CD4-positive, alpha-beta memory T cell (primary cell): ENCODE measurements at regions of chr3 and their contacts with region 1.

Region 1: DNA sequence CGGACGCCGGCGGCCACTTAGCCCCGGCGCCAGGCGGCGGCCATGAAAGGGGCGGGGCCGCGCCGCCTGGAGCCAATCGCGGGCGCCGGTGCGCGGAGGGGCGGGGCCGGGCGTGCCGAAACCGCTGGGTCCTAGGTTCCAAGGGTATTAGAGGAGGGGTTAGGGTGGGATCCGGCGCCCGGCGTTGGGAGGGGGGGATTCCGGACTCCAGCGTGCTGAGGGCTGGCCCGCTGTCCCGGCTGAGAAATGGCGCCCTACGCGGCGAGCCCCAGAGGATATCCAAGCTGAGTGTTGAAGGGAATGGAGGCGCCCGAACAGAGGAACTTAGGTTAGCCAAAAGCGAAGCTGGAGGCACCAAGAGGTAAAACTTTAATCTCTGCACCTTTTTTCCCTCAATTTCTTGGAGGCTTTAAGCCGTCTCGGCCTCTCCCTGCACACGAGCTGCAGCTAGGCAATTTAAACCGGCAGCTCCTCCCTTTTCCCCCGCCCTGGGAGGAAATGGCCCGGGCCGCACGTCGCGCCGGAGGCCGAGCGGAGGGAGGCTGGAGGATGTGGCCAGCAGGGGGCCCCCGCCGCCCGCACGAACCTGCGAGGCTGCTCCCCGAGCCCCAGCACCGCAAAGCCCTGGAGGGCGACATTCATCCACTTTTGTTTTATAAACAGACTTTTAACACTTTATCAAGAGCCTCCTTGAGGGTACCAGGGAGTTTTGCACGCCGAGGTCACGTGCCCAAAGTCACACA is at the start of gene XXYLT1:
- DNase-seq: peak; percentile 87 to 92 (median 89)
- H3K4me3 ChIP-seq: peak within 1 kb of the TSS; percentile 82 to 90
- H3K4me3 Mint-ChIP-seq: peak within 1 kb of the TSS; percentile 85 to 93 (median 88)
- H3K27ac ChIP-seq: peak within 1 kb of the TSS; percentile 55
- H3K27ac Mint-ChIP-seq: peak within 1 kb of the TSS; percentile 77 to 94 (median 93)
- H3K4me1 ChIP-seq: peaks cover 25% of the 10 kb centered on the region
- H3K4me1 Mint-ChIP-seq: peaks cover 10 to 29% (median 23%) of the 10 kb centered on the region in 4 donors
- H3K27me3 ChIP-seq: no peaks in the 10 kb centered on the region
- H3K27me3 Mint-ChIP-seq: no peaks in the 10 kb centered on the region
- total RNA-seq, gene XXYLT1: 3.9 to 4.4 TPM

Region 2: DNA sequence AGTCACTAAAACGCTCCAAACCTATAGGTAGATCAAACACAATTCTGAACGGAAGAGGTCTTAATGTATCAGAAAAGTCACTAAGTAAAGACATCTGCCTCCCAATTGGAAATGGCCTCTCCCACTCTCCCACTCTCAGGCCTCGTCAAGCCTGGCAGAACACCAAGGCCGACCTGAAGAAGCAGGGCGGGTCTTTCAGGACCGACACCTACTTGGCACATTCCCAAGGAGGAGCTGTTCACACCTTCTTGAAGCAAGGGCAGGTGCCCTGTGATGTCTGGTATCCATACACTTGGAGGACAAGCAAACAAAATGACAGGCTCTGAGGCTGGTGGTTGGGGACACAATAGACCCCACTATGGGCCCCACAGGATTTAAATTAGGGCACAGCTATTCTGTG is 30.3 kb before region 1 on chr3:
- CTCF ChIA-PET with region 1: no interaction called
- POLR2A ChIA-PET with region 1: no interaction called
- intact Hi-C with region 1: no loop called
- DNase-seq: no peak
- H3K4me3 ChIP-seq: no peak overlapping the region
- H3K4me3 Mint-ChIP-seq: no peak overlapping the region
- H3K27ac ChIP-seq: no peak overlapping the region
- H3K27ac Mint-ChIP-seq: no peak overlapping the region
- H3K4me1 ChIP-seq: no peaks in the 10 kb centered on the region
- H3K4me1 Mint-ChIP-seq: peaks cover 0 to 2% (median under 1%) of the 10 kb centered on the region in 4 donors
- H3K27me3 ChIP-seq: no peaks in the 10 kb centered on the region
- H3K27me3 Mint-ChIP-seq: no peaks in the 10 kb centered on the region

Region 3: DNA sequence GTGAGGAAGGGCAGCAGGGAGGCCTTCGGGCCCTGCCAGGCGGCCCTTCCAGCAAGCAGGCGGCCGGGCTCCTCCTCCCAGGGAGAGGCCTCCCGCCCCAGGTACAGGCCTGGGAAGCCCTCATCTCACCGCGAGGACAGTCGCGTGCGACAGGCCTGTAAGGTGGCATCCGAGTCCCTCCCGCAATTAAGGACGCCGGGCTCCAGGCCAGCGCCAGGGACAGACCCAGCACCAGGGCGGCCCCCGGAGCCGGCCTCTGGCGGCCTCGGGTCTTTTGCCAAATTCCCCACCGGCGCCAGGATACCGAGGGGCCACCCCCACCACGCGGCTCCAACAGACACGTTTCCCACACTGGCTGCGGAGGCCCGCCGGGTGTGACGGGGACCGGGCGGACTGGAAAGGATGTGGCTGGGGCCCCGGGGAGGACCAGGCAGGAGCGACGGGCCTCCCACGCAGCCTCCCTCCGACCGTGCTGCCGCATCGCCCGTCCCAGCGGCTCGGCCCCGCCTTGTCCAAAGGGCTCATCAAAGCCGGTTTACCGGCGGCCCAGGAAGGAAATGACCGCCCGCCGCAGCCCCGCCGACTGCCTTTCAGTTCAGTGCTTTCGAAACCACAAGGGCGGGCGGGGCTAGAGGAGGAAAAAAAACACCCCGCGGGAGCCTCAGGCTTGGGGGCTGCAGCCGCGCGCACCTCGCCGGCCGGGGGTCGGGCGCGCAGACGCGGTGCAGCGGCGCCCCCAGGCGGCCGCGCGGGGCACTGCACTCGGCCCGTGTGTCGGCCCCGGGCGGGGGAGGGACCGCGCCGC is 11.6 kb before region 1 on chr3:
- CTCF ChIA-PET with region 1: interaction called, 43 read pairs
- POLR2A ChIA-PET with region 1: interaction called, 31 read pairs
- intact Hi-C with region 1: loop called (anchors 1 kb)
- DNase-seq: peak; percentile 87 to 94 (median 89)
- H3K4me3 ChIP-seq: peak overlapping the region in 1 of 2 donors; percentile 90
- H3K4me3 Mint-ChIP-seq: peak overlapping the region; percentile 62 to 79 (median 72)
- H3K27ac ChIP-seq: peak overlapping the region; percentile 76
- H3K27ac Mint-ChIP-seq: peak overlapping the region; percentile 75 to 93 (median 84)
- H3K4me1 ChIP-seq: peaks cover 27% of the 10 kb centered on the region
- H3K4me1 Mint-ChIP-seq: peaks cover 8 to 24% (median 14%) of the 10 kb centered on the region in 4 donors
- H3K27me3 ChIP-seq: no peaks in the 10 kb centered on the region
- H3K27me3 Mint-ChIP-seq: no peaks in the 10 kb centered on the region

Region 4: DNA sequence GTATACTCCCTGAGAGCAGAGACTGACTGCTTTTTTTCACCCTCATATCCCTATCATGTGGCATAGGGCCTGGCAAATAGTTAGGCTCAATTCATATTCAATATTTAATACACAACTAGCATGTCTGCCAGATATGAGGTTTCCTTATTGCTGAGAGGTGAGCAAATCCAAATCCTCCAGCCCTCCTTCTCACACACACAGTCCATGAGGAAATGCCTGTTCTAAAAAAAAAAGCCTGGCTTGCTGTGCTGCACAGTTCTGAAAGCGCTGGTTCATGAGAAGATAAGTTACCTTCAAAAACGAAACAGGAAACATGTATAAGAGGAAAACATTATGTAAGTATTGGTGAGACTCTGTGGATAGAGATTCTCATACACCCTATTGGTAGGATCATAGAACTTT is 187.0 kb after region 1 on chr3:
- CTCF ChIA-PET with region 1: interaction called, 6 read pairs
- POLR2A ChIA-PET with region 1: interaction called, 3 read pairs
- intact Hi-C with region 1: loop called (anchors 1 kb)
- DNase-seq: peak in 4 of 5 donors; percentile 43 to 59 (median 50)
- H3K4me3 ChIP-seq: no peak overlapping the region
- H3K4me3 Mint-ChIP-seq: peak overlapping the region; percentile 20 to 78 (median 76)
- H3K27ac ChIP-seq: no peak overlapping the region
- H3K27ac Mint-ChIP-seq: peak overlapping the region; percentile 45 to 92 (median 91)
- H3K4me1 ChIP-seq: peaks cover 13% of the 10 kb centered on the region
- H3K4me1 Mint-ChIP-seq: peaks cover 7 to 25% (median 15%) of the 10 kb centered on the region in 4 donors
- H3K27me3 ChIP-seq: no peaks in the 10 kb centered on the region
- H3K27me3 Mint-ChIP-seq: peaks cover 0 to 3% of the 10 kb centered on the region in 2 donors

Region 5: GRCh38 chr3:195522254-195523023 is 251.2 kb after region 1 on chr3:
- CTCF ChIA-PET with region 1: interaction called, 112 read pairs
- POLR2A ChIA-PET with region 1: interaction called, 33 read pairs
- intact Hi-C with region 1: loop called (anchors 1 kb)
- DNase-seq: peak in 4 of 5 donors; percentile 46 to 56 (median 54)
- H3K4me3 ChIP-seq: no peak overlapping the region
- H3K4me3 Mint-ChIP-seq: peak overlapping the region in 1 of 8 donors; percentile 31
- H3K27ac ChIP-seq: no peak overlapping the region
- H3K27ac Mint-ChIP-seq: peak overlapping the region; percentile 38 to 82 (median 58)
- H3K4me1 ChIP-seq: peaks cover 50% of the 10 kb centered on the region
- H3K4me1 Mint-ChIP-seq: peaks cover 36 to 51% (median 42%) of the 10 kb centered on the region in 4 donors
- H3K27me3 ChIP-seq: no peaks in the 10 kb centered on the region
- H3K27me3 Mint-ChIP-seq: no peaks in the 10 kb centered on the region

Region 6: DNA sequence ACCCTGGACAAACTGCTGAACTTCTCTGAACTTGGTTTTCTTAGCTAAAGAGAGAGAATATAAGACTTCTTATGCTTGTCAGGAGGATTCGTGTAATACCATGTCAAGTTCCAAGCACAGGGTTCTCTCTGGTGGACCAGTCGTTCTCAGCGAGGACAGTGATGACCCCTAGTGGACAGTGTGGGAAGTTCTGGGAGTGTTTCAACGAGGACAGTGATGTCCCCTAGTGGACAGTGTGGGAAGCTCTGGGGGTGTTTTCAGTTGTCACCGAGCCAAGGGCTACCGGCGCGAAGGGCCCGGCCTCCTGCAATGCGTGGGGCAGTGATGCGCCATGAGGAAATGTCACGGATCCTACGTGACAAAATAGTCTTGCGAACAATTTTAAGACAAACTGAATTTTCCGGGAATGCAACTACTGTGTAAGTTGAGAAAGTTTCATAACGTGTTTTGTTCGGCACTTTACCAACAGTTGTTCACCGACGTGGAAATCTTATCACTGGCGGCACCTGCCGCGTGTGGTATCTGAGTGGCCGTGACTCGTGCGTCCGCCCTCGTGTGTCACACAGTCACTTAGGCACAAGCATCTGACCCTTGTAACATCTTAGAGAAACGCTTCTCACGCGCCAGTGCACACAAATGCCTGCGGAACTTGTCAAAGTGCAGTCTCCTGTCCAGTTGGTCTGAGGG is 579.7 kb after region 1 on chr3:
- CTCF ChIA-PET with region 1: interaction called, 5 read pairs
- POLR2A ChIA-PET with region 1: no interaction called
- intact Hi-C with region 1: loop called (anchors 1 kb)
- DNase-seq: peak; percentile 83 to 89 (median 88)
- H3K4me3 ChIP-seq: no peak overlapping the region
- H3K4me3 Mint-ChIP-seq: peak overlapping the region in 5 of 8 donors; percentile 40 to 63 (median 50)
- H3K27ac ChIP-seq: no peak overlapping the region
- H3K27ac Mint-ChIP-seq: peak overlapping the region in 2 of 7 donors; percentile 6 to 32
- H3K4me1 ChIP-seq: peaks cover 5% of the 10 kb centered on the region
- H3K4me1 Mint-ChIP-seq: peaks cover 5 to 8% (median 6%) of the 10 kb centered on the region in 4 donors
- H3K27me3 ChIP-seq: no peaks in the 10 kb centered on the region
- H3K27me3 Mint-ChIP-seq: peaks cover 0 to 4% of the 10 kb centered on the region in 2 donors